HEK293 (cell line): ENCODE measurements at regions of chr1 and their contacts with region 1.

Region 1: GRCh38 chr1:155989242-155990004 is 11.1 kb upstream of the ARHGEF2 start:
- H3K4me3 ChIP-seq: no peak overlapping the region
- H3K27ac ChIP-seq: no peak overlapping the region
- H3K4me1 ChIP-seq: no peaks in the 10 kb centered on the region
- CTCF ChIP-seq: peak; percentile 97

Region 2: GRCh38 chr1:155961937-155962336 is 27.5 kb before region 1 on chr1:
- CTCF ChIA-PET with region 1: interaction called, 17 read pairs
- POLR2A ChIA-PET with region 1: interaction called, 8 read pairs
- H3K4me3 ChIP-seq: no peak overlapping the region
- H3K27ac ChIP-seq: no peak overlapping the region
- H3K4me1 ChIP-seq: no peaks in the 10 kb centered on the region
- CTCF ChIP-seq: no peak

Region 3: DNA sequence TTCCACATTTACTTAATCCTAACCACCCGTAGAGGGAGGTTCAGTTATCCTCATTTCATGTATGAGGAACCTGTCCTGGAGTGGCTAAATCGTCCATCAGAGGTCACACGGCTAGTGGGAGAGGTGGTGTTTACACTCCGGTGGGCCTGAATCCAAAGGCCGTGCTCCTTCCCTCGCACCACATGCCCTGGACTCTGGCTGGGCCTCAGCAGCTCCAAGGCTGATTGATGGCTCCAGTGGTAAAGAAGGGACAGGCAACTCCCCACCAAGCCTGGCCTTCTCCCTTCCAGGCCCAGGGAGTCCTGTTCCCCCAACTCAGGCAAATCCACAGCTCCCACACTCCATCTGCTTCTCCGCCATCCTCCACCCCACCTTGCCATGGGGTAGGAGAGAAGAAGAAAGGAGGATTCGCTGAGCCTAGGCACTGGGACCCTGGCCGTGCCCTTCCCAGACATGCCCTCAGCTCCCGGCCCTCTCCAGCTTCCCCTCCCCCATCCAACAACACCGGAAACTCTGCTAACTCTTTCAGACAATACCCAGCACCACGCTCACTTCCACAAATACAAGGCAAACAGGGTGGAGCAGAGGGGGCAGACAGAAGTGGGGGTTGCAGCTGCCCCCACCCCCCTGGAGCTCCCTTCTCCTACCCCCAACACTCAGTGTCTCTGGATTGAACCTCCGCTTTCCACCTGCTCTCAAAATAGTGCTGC is 21.9 kb before region 1 on chr1:
- CTCF ChIA-PET with region 1: interaction called, 13 read pairs
- POLR2A ChIA-PET with region 1: interaction called, 8 read pairs
- H3K4me3 ChIP-seq: no peak overlapping the region
- H3K27ac ChIP-seq: 0 out of 2 replicates have a peak overlapping the region, but pooled peaks have one; percentile 9
- H3K4me1 ChIP-seq: no peaks in the 10 kb centered on the region; the same call in 1 of the 2 replicates
- CTCF ChIP-seq: no peak

Region 4: GRCh38 chr1:155978325-155978972 is 11.0 kb before region 1 on chr1 and contains the start of gene ARHGEF2:
- CTCF ChIA-PET with region 1: interaction called, 45 read pairs
- POLR2A ChIA-PET with region 1: interaction called, 7 read pairs
- H3K4me3 ChIP-seq: peak within 1 kb of the TSS; percentile 91
- H3K27ac ChIP-seq: peak within 1 kb of the TSS; percentile 97
- H3K4me1 ChIP-seq: peaks cover 36% of the 10 kb centered on the region
- CTCF ChIP-seq: peak; percentile 68; the same call in 1 of the 2 replicates

Region 5: GRCh38 chr1:156245451-156246232 is 256.2 kb after region 1 on chr1:
- CTCF ChIA-PET with region 1: no interaction called
- POLR2A ChIA-PET with region 1: no interaction called
- H3K4me3 ChIP-seq: no peak overlapping the region
- H3K27ac ChIP-seq: no peak overlapping the region
- H3K4me1 ChIP-seq: no peaks in the 10 kb centered on the region
- CTCF ChIP-seq: no peak